ENCODE measurements at regions of chr13 and their contacts with region 1.

Region 1: DNA sequence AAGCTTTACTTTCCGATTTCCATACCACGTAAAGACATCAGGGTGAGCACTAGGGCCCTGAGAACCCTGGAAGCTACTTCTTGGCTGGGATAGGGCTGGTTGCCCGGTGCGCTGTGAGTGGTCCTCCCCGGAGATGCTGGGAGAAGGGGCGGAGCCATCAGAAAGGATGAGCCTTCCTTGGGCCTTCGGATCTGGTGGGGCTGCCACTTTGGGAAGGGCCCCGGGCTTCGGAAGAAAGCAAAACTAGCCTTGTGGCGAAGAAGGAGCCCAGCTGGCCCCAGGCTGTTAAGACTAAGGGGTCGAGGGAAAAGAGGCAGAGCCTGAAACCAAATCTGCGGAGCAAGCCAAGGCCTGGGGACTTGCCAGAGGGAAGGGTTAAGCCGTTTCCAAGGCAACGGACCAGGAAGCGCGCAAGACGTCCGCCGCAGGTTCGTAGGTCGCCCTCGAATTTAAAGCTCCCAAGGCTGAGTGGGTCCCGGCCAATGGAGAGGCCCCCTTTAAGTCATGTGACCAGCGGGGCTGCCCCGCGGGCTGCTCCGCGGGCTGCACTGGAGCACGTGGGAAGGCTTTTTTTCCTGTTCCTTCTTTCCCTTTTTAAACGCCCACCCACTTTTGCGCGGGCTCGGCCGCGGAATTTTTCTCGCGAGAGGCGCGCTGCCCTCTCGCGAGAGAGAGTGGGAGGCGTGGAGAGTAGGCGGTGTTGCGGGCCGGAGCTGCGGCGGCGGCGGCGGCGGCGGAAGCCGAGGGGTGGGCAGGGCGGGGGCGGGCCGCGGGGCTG is 426 bp upstream of the AKAP11 start:
- DNase-seq: peak; percentile 96
- H3K4me3 Mint-ChIP-seq: peak overlapping the region; percentile 98
- H3K27ac Mint-ChIP-seq: peak overlapping the region; percentile 98
- H3K4me1 Mint-ChIP-seq: peaks cover 43% of the 10 kb centered on the region
- H3K27me3 Mint-ChIP-seq: no peaks in the 10 kb centered on the region

Region 2: DNA sequence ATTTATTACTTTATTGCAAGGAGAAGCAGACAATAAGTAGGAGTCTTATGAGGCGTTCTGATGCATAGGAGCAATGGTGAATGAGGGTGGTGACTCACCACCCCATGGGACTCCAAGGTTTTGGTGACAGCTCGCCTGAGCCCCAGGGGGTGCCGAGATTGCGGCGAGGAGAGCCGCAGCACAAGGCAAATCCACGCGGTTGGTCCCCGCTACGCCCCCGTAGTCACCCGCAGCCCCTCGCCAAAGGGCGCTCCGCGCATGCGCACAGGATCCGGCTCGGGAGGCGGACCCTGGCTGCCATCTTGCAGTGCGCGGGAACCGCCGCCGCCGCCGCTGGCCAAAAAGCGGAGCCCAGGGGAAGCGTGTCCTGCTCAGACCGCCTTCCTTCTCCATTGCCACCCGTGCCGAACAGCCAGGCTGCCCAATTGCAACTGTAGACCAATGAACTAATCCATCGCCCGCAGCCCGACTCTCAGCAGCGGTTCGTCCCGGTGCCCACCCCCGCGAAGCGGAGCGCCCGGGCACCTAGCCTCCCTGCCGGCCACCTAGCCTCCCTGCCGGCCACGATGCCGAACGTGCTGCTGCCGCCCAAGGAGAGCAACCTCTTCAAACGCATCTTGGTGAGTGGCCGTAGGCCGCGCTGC is 960.4 kb before region 1 on chr13 and contains the start of gene NAA16:
- CTCF ChIA-PET with region 1: no interaction called
- POLR2A ChIA-PET with region 1: no interaction called
- intact Hi-C with region 1: loop called (anchors 2 kb)
- DNase-seq: peak; percentile 97
- H3K4me3 Mint-ChIP-seq: peak within 1 kb of the TSS; percentile 93
- H3K27ac Mint-ChIP-seq: peak within 1 kb of the TSS; percentile 92
- H3K4me1 Mint-ChIP-seq: peaks cover 34% of the 10 kb centered on the region
- H3K27me3 Mint-ChIP-seq: no peaks in the 10 kb centered on the region
- total RNA-seq, gene NAA16: 19.2 to 23.2 TPM

Region 3: DNA sequence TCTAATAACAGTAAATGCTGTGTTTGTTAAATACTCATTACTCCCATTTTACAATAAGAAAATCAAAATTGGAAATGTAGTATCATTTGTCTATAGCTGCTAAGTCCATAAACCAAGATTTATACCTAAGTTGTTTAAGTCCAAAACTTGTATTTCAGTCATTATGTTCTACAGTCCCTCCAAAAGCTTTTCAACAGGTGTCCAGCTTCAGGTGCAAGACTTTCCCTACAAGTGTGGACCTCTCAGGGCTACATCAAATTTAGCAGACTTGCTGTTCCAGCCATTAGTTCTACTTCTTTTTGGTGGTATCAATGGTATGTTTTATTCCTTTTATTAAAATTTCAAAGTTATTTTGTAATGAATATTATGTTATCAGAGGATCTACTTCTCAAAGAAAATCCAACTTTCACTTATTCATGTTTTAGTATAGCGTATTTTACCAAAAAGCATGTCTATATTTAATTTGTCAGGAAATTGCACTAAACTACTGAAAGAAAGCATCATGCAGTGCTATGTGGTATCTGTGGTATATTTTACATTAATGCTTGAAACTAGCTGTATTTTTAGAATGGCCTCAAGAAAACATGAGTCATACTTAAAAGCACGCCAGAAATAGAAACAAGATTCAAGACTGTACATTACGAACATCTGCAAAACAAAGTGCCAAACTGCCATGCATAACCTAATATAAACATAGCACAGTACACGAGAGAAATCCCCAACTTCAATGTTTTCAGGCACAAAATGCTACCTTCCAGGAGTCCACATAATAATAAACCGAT is 355.2 kb before region 1 on chr13:
- CTCF ChIA-PET with region 1: no interaction called
- POLR2A ChIA-PET with region 1: no interaction called
- intact Hi-C with region 1: loop called (anchors 5 kb)
- DNase-seq: no peak
- H3K4me3 Mint-ChIP-seq: peak overlapping the region; percentile 54
- H3K27ac Mint-ChIP-seq: peak overlapping the region; percentile 84
- H3K4me1 Mint-ChIP-seq: peaks cover 29% of the 10 kb centered on the region
- H3K27me3 Mint-ChIP-seq: no peaks in the 10 kb centered on the region

Region 4: GRCh38 chr13:42328672-42329071 is 57.1 kb after region 1 on chr13:
- CTCF ChIA-PET with region 1: no interaction called
- POLR2A ChIA-PET with region 1: interaction called, 4 read pairs
- intact Hi-C with region 1: loop called (anchors 5 kb)
- DNase-seq: no peak
- H3K4me3 Mint-ChIP-seq: no peak overlapping the region
- H3K27ac Mint-ChIP-seq: peak overlapping the region; percentile 60
- H3K4me1 Mint-ChIP-seq: peaks cover 22% of the 10 kb centered on the region
- H3K27me3 Mint-ChIP-seq: no peaks in the 10 kb centered on the region

Region 5: GRCh38 chr13:42384260-42384659 is 112.7 kb after region 1 on chr13:
- CTCF ChIA-PET with region 1: no interaction called
- POLR2A ChIA-PET with region 1: no interaction called
- intact Hi-C with region 1: no loop called
- DNase-seq: no peak
- H3K4me3 Mint-ChIP-seq: no peak overlapping the region
- H3K27ac Mint-ChIP-seq: no peak overlapping the region
- H3K4me1 Mint-ChIP-seq: peaks cover 41% of the 10 kb centered on the region
- H3K27me3 Mint-ChIP-seq: no peaks in the 10 kb centered on the region

Region 6: DNA sequence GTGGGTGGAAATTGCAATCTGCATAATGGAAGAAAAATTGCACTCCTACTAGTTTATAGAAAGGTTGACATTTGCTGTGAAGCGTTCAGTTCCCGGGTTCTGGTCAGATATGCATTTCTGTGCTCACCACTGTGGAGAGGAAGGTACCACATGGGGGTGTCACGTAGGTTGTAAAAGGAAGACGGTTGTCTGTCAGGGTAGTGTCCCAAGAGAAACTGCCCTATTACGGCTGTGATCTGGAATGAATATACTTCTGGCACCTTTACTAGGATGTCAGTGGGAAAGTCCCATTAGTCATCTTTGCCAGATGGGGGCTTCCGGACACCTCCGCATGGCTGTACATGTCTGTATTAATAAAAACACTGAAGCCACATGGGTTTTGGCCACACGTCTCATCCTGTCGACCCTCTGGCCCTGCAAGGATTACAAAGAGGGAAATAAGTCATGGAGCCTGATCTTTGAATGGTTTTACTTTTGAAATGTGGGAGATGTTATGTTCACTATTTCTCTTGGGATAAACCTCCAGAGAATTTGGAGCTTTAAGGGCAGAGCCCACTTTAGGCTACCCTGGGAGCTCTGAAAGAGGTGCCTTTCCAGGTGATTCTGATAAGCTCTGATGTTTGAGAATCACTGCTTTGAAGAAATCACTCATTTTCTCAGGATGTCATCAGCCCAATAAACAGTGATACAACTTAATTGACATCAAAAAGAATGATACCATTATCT is 134.3 kb after region 1 on chr13:
- CTCF ChIA-PET with region 1: no interaction called
- POLR2A ChIA-PET with region 1: interaction called, 8 read pairs
- intact Hi-C with region 1: loop called (anchors 1 kb)
- DNase-seq: peak; percentile 89
- H3K4me3 Mint-ChIP-seq: peak overlapping the region; percentile 59
- H3K27ac Mint-ChIP-seq: peak overlapping the region; percentile 93
- H3K4me1 Mint-ChIP-seq: peaks cover 75% of the 10 kb centered on the region
- H3K27me3 Mint-ChIP-seq: no peaks in the 10 kb centered on the region

Region 7: DNA sequence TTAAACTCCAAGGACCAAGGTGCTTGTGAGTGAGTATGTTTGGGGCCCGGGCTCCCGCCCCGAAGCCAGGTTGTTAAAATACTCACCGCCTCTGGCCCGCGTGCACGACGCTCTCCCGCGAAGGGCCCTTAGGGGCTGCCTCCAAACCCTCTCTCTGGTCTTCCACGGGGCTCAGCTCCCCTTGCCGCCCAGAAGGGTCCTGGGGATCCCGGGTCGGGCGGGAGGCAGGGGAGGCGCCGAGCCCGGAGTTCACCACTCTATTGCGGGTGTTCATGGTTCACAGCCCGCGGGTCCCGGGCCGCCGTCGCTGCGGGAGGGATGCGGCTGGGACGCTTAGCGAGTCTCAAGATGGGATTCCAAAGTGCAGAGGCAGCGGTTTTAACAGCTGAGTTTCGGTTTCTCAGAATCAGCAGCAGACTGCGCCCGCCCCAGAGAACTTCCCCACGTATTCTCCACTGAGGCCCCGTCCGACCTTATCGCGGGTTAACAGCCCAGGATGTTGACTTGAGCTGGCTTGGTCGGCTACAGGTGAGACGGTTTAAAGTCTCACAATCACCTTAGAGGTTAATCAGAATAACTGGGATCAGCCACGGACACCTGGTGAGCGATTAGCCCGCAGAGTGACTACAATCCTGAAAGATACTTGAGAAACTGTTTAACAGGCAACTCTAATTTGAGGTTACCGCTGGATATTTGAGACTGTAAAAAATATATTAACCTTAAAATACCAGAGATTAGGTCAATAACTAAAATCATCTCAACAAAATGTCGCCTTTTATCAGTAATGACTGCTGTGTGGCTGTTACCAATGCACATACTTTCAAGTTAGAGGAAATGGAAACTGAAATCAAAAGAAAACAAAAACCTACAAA is 720.6 kb after region 1 on chr13 and contains the start of gene EPSTI1:
- CTCF ChIA-PET with region 1: no interaction called
- POLR2A ChIA-PET with region 1: no interaction called
- intact Hi-C with region 1: loop called (anchors 10 kb)
- DNase-seq: peak; percentile 84
- H3K4me3 Mint-ChIP-seq: peak within 1 kb of the TSS; percentile 86
- H3K27ac Mint-ChIP-seq: peak within 1 kb of the TSS; percentile 97
- H3K4me1 Mint-ChIP-seq: peaks cover 43% of the 10 kb centered on the region
- H3K27me3 Mint-ChIP-seq: no peaks in the 10 kb centered on the region
- total RNA-seq, gene EPSTI1: 21.1 to 21.9 TPM